ENCODE measurements at regions of chr20 and their contacts with region 1.

Region 1: DNA sequence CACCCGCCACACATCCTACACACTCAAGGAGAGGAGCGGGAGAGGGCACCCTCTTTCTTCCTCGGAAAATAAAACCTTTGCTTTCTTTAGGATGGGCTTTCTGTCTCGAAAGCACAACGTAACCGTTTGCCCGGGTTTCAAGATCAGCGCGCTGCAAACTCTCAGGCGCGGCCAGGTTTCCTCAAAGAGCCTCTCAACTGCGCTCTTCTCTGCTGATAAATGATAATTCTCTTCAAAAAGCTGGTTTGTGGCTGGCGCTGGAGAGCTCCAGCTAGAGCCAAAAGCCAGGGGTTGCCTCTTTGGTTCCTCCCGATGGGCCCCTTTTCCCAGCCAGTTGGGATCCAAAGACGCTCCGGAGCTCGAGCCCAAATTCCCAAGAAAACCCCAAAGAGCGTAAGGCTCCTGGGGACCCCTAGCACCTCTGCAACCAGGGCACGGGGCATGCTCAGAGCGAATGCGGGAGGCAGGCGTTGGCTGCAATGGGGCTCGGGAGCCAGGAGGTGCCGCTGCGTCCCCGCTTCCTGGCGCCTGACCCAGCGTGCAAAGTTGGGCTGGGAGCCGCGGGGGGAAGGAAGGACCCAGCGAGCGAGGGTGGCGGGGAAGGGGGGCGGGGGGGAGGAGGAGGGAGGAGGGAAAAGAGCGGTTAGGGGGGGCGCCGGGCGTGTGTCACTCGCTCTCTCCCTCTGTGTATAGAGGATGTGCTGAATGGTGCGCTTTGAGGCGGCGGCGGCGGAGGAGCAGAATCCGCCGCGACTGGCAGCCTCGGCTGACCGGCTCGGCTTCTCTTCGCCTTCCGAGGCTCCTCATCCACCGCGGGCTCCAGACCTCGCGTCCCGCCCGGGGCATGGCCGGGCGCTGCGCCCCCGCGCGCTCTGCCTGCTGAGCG is at the start of gene PLCB1:
- DNase-seq: peak; percentile 92
- H3K4me3 Mint-ChIP-seq: peak within 1 kb of the TSS; percentile 83
- H3K27ac Mint-ChIP-seq: peak within 1 kb of the TSS; percentile 41
- H3K4me1 Mint-ChIP-seq: peaks cover 13% of the 10 kb centered on the region
- H3K27me3 Mint-ChIP-seq: peaks cover 48% of the 10 kb centered on the region
- total RNA-seq, gene PLCB1: 1.2 and 1.9 TPM in 2 replicates

Region 2: DNA sequence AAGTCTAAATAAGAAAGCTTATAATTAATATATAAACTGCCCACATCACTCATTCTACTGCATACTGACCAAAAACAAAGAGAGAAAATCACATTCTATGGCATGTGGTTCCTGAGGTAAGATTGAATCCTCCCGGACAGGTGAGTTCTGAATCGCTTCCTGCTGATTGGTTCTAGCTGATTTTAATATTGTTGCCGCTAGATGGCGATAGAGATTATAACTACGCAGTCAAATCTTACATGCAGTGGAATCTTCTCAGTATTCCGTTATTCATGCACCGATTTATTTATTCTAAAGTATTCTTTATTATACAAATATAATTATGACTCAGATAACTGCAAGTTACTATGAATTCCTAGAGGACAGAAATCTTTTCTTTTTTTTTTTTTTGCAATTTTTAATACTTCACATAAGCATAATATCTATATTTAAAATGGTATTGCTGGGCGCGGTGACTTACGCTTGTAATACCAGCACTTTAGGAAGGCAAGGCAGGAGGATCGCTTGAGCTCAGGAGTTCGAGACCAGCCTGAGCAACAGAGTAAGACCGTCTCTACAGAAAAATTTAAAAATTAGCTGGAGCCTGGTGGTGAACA is 88.1 kb before region 1 on chr20:
- intact Hi-C with region 1: loop called (anchors 5 kb)
- DNase-seq: peak; percentile 80
- H3K4me3 Mint-ChIP-seq: no peak overlapping the region
- H3K27ac Mint-ChIP-seq: no peak overlapping the region
- H3K4me1 Mint-ChIP-seq: peaks cover 2% of the 10 kb centered on the region
- H3K27me3 Mint-ChIP-seq: peaks cover 24% of the 10 kb centered on the region

Region 3: GRCh38 chr20:8062756-8063155 is 69.1 kb before region 1 on chr20:
- intact Hi-C with region 1: no loop called
- DNase-seq: no peak
- H3K4me3 Mint-ChIP-seq: no peak overlapping the region
- H3K27ac Mint-ChIP-seq: no peak overlapping the region
- H3K4me1 Mint-ChIP-seq: no peaks in the 10 kb centered on the region
- H3K27me3 Mint-ChIP-seq: peaks cover 2% of the 10 kb centered on the region

Region 4: DNA sequence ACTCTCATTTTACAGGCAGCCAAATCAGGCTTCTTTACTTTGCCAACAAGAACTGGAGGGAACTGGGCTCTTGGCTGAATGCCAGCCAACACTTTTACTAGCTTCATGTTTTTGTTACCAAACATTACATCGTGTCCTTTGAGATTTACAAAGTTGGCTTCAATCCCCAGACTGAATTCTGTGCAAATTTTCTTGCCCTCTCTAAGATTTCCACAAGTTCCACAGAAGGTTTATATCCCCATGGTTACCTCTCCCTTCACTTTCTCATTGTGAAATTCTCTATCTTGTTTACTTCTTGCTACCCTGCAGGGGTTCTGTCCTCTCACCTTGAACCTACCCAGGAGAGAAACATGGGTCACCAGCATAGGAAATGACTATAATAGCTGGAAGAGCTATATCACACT is 37.4 kb before region 1 on chr20:
- intact Hi-C with region 1: no loop called
- DNase-seq: no peak
- H3K4me3 Mint-ChIP-seq: no peak overlapping the region
- H3K27ac Mint-ChIP-seq: no peak overlapping the region
- H3K4me1 Mint-ChIP-seq: no peaks in the 10 kb centered on the region
- H3K27me3 Mint-ChIP-seq: peaks cover 2% of the 10 kb centered on the region

Region 5: DNA sequence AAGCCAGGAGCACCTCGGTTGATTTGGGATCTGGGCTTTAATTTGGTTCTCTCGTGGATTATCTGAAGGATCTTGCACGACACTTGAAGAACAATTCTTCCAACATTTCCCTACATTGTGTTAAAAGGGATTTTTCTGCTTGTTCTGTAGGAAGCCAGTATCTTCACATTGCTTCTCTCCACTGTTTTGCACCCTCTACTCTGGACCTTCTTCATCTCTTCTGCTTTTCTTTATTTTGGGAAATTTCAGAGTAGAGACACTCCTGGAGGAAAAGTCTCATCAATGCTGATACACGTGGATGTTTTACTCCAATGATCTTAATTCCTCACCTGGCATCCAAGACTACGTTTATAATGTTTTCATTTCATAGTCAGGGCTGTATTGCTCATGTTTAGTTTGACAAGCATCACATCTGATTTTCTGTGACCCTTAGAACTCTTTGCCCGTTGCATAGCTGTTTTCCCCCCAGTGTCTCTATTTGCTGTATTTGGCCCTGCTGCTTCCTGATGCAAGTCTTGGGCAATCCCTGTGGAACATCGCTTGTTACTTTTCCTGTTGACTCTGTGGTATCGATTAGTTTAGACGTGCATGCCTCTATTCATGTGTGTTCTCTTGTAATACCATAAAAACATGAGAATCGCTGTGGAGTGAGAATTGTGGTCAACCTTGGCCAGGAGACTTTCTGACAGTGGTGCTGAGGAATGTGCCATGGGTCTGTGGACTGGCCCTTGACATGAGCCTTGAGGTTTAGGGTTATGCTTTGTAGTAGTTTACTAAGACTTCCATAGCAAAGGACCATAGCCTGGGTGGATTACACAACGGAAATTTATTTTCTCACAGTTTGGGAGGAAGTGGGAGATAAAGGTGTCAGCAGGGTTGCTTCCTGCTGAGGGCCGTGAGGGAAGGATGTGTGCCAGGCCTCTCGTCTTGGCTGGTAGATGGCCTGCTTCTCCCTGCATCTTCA is 12.7 kb after region 1 on chr20:
- intact Hi-C with region 1: no loop called
- DNase-seq: no peak
- H3K4me3 Mint-ChIP-seq: no peak overlapping the region
- H3K27ac Mint-ChIP-seq: no peak overlapping the region
- H3K4me1 Mint-ChIP-seq: peaks cover 8% of the 10 kb centered on the region
- H3K27me3 Mint-ChIP-seq: peaks cover 1% of the 10 kb centered on the region

Region 6: DNA sequence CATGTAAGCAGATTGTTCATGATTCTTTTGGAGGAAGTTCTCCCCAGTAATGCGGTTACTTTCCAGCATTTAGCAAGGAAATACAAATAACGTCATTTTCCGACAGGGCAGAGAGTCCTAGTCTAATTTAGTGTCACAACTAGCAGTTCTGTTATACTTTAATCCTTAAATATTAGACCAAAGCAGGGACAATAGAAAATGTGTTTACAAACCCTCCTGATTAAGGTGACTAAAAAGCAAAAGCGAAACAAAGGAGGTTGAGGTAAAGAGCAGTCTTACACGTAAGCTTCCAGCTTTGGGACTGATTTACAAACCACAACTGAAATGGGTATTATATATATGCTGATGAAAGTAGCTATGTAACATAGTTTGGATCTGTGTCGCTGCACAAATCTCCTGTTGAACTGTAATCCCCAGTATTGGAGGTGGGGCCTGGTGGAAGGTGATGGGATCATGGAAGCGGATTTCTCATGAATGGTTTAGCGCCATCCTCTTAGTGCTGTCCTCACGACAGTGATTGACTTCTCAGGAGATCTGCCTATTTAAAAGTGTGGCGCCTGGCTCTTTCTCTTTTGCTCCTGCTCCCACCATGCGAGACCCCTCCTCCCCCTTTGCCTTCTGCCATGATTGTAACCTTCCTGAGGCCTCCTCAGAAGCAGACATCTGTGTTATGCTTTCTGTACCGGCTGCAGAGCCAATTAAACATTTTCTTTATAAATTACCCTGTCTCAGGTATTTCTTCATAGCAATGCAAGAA is 82.2 kb after region 1 on chr20:
- intact Hi-C with region 1: loop called (anchors 2 kb)
- DNase-seq: peak; percentile 71
- H3K4me3 Mint-ChIP-seq: peak overlapping the region; percentile 77
- H3K27ac Mint-ChIP-seq: peak overlapping the region; percentile 64
- H3K4me1 Mint-ChIP-seq: peaks cover 43% of the 10 kb centered on the region
- H3K27me3 Mint-ChIP-seq: peaks cover 2% of the 10 kb centered on the region

Region 7: GRCh38 chr20:8305449-8305978 is 173.7 kb after region 1 on chr20:
- intact Hi-C with region 1: loop called (anchors 1 kb)
- DNase-seq: peak; percentile 90
- H3K4me3 Mint-ChIP-seq: no peak overlapping the region
- H3K27ac Mint-ChIP-seq: no peak overlapping the region
- H3K4me1 Mint-ChIP-seq: no peaks in the 10 kb centered on the region
- H3K27me3 Mint-ChIP-seq: peaks cover 2% of the 10 kb centered on the region

Region 8: GRCh38 chr20:8389381-8390036 is 257.7 kb after region 1 on chr20:
- intact Hi-C with region 1: loop called (anchors 1 kb)
- DNase-seq: no peak
- H3K4me3 Mint-ChIP-seq: no peak overlapping the region
- H3K27ac Mint-ChIP-seq: no peak overlapping the region
- H3K4me1 Mint-ChIP-seq: peaks cover 4% of the 10 kb centered on the region
- H3K27me3 Mint-ChIP-seq: no peaks in the 10 kb centered on the region

Region 9: DNA sequence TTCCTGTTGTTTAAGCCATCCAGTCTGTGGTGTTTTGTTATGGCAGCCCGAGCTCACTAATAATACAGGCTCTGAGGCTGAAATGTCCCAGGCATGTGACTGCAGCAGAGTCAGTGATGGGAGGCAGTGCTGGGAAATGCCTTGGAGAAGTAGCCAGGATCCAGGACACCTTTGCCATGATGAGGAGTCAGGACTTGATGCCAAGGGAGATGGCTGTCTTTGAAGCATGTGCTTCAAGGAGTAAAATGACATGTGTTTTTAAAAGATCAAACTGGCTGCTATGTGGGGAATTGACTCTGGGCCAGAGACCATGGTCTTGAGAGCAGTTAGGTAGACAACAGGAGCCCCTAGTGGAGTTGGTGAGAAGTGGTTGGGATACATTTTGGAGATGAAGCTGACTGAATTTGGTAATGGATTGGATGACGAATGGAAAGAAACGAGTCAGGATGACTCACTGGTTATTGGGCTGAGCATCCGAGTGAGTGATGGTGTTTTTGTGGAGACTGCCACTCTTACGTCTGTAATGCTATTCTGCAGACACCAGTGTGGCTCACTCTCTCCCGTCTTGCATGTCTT is 322.4 kb after region 1 on chr20:
- intact Hi-C with region 1: loop called (anchors 1 kb)
- DNase-seq: no peak
- H3K4me3 Mint-ChIP-seq: no peak overlapping the region
- H3K27ac Mint-ChIP-seq: peak overlapping the region; percentile 9
- H3K4me1 Mint-ChIP-seq: peaks cover 5% of the 10 kb centered on the region
- H3K27me3 Mint-ChIP-seq: no peaks in the 10 kb centered on the region

Region 10: DNA sequence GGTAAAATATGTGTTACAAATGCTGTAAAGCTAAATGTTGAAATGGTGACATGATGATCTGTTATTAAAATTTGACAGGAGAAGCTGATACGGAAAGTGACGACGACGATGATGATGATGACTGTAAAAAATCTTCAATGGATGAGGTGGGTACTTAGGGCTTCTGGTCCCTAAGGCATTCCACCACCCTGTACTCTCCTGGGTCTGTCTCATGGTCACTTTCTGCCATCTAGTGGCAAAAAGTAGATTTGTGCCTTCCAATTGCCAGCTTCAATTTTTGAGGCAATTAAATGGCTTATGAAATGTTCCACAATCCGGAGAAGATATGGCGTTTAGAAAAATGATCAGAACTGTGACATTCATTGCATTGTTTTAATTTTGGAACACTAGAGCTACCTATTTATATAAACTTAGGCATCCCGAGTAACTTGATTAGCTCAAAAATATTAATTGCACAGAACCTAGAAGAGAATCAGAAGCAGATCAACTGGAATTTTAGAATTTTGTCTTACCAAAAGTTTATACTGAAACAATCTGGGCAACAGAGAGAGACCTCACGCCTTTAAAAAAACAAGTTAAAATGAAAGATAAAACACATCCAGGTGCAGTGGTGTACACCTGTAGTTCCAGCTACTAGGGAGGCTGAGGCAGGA is 590.6 kb after region 1 on chr20:
- intact Hi-C with region 1: loop called (anchors 1 kb)
- DNase-seq: peak; percentile 76
- H3K4me3 Mint-ChIP-seq: no peak overlapping the region
- H3K27ac Mint-ChIP-seq: no peak overlapping the region
- H3K4me1 Mint-ChIP-seq: no peaks in the 10 kb centered on the region
- H3K27me3 Mint-ChIP-seq: no peaks in the 10 kb centered on the region